ENCODE measurements at regions of chr6 and their contacts with region 1.

Region 1: GRCh38 chr6:4351520-4352315 is 216.3 kb upstream of the ECI2 start:
- DNase-seq: peak; percentile 80
- H3K4me3 ChIP-seq: peak overlapping the region in 2 of 3 experiments; percentile 6 to 35
- H3K27ac ChIP-seq: peak overlapping the region; percentile 59
- H3K4me1 ChIP-seq: peaks cover 42% of the 10 kb centered on the region
- H3K27me3 ChIP-seq: no peaks in the 10 kb centered on the region
- CTCF ChIP-seq: no peak

Region 2: DNA sequence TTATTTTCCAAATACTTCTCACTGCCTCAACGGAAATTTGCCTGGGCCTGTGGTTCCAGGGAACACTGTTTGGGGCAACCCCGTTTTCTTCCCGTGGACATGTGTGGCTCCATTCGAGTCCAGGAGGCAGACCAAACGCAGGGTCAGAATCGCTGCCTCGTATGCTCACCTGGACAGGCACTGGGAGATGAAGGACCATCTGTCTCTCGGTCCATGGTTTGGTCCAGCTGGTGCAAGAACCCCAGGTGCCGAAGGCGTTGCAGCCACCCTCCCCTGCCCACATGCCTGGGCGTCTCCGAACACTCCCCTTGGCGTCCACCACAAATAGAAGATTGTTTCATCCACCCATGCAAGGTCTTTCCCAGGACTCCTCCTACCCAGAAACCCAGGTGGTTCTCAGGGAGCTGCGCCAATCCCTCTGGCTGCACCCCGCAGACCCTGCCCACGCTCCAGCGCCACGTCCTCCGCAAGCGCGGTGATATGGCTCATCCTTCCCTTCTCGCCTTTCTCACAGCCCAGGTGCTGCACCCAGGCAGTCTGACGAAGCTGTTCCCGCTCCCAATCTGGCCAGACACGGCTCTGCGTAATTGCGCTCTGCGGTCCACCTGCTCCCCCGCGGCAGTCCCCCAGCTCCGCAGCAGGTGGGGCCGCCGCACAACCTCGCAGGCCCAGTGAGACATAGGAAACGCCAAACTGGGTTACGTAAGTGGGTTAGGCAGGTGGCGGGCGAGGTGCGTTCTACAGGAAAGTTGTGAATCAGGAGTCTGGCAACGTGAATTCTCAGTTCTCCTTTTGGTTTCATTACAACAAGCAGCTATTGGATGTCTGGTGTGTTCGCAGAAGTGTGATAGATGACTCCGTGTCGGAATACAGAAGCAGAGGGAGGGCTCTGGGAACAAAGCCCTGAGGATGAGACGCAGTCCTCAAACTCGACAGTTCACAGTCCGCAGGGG is 70.1 kb before region 1 on chr6:
- CTCF ChIA-PET with region 1: no interaction called
- dilution Hi-C with region 1: loop called (anchors 5 kb)
- in situ Hi-C with region 1: no loop called
- intact Hi-C with region 1: no loop called
- DNase-seq: peak; percentile 95
- H3K4me3 ChIP-seq: peak overlapping the region; percentile 25 to 47 (median 25)
- H3K27ac ChIP-seq: peak overlapping the region; percentile 15
- H3K4me1 ChIP-seq: peaks cover 19% of the 10 kb centered on the region
- H3K27me3 ChIP-seq: no peaks in the 10 kb centered on the region
- CTCF ChIP-seq: peak; percentile 41 to 62

Region 3: GRCh38 chr6:4620284-4621151 is 268.8 kb after region 1 on chr6:
- CTCF ChIA-PET with region 1: interaction called, 11 read pairs
- dilution Hi-C with region 1: no loop called
- in situ Hi-C with region 1: no loop called
- intact Hi-C with region 1: no loop called
- DNase-seq: no peak
- H3K4me3 ChIP-seq: no peak overlapping the region
- H3K27ac ChIP-seq: no peak overlapping the region
- H3K4me1 ChIP-seq: no peaks in the 10 kb centered on the region
- H3K27me3 ChIP-seq: no peaks in the 10 kb centered on the region
- CTCF ChIP-seq: no peak

Region 4: GRCh38 chr6:4805553-4806336 is 454.0 kb after region 1 on chr6:
- CTCF ChIA-PET with region 1: no interaction called
- dilution Hi-C with region 1: no loop called
- in situ Hi-C with region 1: no loop called
- intact Hi-C with region 1: loop called (anchors 2 kb)
- DNase-seq: peak; percentile 40
- H3K4me3 ChIP-seq: no peak overlapping the region
- H3K27ac ChIP-seq: peak overlapping the region; percentile 50
- H3K4me1 ChIP-seq: peaks cover 43% of the 10 kb centered on the region
- H3K27me3 ChIP-seq: no peaks in the 10 kb centered on the region
- CTCF ChIP-seq: peak; percentile 76 to 88